ENCODE measurements at regions of chr5 and their contacts with region 1.

Region 1: DNA sequence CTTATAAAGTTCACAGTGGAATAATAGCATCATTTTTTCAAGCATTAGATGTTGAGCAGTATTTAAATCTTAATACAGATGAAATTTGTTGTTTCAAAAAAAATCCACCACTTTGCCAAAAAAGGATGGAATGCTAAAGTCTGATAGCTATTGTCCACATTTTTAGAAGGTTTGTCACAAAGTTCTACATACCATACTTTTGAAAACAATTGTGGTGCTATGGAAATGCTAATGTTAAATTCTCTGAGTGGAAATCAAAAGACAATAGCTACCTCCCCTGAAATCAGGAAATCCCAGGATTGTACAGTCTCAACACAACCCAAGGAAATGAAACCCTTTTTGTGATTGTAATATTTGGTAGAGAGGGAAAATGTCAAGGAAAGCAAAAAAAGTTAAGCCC is 19.3 kb upstream of the GRAMD2B start:
- DNase-seq: no peak
- H3K4me3 ChIP-seq: no peak overlapping the region
- H3K27ac ChIP-seq: no peak overlapping the region
- H3K4me1 ChIP-seq: no peaks in the 10 kb centered on the region
- H3K27me3 ChIP-seq: no peaks in the 10 kb centered on the region
- CTCF ChIP-seq: no peak

Region 2: DNA sequence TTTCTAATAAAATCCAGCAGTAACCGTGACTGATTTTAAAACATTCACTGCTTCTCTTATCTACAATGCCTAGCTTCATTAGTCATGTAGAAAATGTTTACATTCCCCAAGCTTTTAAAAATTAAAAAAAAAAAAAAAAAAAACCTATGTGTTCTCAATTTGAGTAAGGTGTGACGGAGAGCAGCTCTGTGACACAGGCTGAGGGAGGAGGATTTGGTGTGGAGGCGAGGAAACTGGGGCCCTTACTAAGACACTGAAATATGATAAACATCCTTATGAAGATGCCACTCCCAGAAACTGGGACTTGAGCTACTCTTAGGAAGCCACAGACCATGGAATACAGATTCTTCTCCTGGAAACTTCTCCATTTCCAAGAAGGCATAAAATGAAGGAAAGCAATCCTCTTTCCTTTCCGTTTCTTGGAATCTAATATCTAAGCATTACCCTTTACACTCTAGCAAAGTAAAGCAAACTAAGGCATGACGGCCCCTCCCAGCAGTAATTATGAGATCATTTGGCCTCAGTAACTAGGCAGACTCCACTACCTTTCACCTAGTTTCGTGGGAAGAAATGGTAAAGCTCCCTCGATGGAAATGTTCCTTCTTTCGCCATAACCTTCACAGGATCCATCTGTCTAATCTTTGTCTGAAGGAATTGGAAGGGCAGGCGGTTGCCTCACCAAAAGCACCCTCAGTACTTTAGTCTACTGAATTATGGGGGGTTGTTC is 42.8 kb after region 1 on chr5:
- CTCF ChIA-PET with region 1: no interaction called
- POLR2A ChIA-PET with region 1: interaction called, 12 read pairs
- intact Hi-C with region 1: no loop called
- DNase-seq: peak; percentile 63 to 77
- H3K4me3 ChIP-seq: no peak overlapping the region
- H3K27ac ChIP-seq: peak overlapping the region; percentile 83
- H3K4me1 ChIP-seq: peaks cover 17% of the 10 kb centered on the region
- H3K27me3 ChIP-seq: no peaks in the 10 kb centered on the region
- CTCF ChIP-seq: no peak

Region 3: DNA sequence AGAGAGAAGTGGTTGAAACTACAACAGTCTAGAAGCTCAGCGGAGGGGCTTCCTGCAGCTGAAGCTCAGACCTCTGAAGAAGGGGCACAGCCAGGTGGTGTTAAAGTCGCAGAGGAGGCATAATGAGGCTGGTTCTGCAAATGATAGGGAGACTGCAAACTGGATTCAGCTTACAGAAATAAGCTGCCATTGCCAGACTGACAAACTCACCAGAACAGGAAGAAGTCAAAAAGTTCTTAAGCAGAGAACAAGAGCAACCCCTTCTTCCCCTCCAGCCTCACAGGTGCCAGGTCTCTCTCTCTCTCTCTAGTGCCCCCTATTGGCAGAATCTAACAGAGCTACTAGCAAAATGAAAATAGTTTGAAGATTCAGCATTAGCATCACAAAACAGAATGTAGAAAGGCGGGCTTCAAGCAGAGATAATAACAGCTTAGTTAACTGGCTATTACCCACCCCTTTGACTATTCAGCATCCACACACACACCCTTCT is 96.0 kb after region 1 on chr5:
- CTCF ChIA-PET with region 1: no interaction called
- POLR2A ChIA-PET with region 1: no interaction called
- intact Hi-C with region 1: no loop called
- DNase-seq: no peak
- H3K4me3 ChIP-seq: no peak overlapping the region
- H3K27ac ChIP-seq: no peak overlapping the region
- H3K4me1 ChIP-seq: no peaks in the 10 kb centered on the region
- H3K27me3 ChIP-seq: no peaks in the 10 kb centered on the region
- CTCF ChIP-seq: peak; percentile 57

Measured in PC-9 (cell line).